ENCODE measurements at regions of chr16 and their contacts with region 1.

Region 1: DNA sequence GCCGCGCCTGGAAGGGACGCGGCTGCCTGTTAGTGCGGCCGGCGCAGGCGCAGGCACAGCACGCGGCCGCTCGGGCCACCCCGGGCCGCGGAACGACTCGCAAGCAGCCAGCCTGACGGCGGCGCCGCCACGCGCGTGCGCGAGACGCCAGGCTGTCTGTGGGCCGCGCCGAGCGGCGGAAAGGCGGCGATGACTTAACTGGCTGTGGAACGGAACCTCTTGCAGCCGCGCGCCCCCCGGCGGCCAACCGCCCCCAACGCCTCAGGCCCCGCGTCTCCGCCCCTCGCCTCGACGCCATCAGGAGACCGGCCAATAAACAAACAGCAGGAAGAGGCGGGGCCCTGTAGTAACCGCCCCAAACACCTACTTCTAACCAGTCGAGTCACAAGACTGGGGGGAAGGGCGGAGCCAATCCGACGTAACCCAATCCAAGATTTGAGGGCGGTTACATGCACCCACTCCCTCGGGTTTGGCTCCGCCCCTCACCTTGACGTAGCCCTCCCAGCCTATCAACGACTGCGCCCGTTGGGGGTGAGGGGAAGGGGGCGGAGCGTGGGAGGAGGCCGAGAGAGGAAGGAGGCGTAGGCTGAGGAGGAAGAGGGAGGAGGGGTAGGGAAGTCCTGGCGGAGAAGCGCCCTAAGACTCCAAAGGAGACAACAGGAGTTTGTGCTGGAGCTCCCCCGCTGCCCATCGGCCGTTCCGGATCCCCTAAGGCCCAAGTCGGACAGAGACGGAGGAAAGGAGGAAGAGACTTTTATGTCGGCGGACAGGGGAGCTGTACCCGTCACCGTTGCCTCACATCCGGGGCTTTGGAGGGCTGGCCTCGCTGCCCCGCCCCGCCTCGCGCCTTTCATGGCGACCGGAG is at the start of gene FBRS:
- DNase-seq: peak; percentile 100
- H3K4me3 Mint-ChIP-seq: peak within 1 kb of the TSS; percentile 89
- H3K27ac Mint-ChIP-seq: peak within 1 kb of the TSS; percentile 100
- H3K4me1 Mint-ChIP-seq: peaks cover 27% of the 10 kb centered on the region
- H3K27me3 Mint-ChIP-seq: no peaks in the 10 kb centered on the region
- total RNA-seq, gene FBRS: 107 TPM in 2 replicates

Region 2: GRCh38 chr16:29862884-29863668 is 795.0 kb before region 1 on chr16 and contains the start of gene CDIPT:
- intact Hi-C with region 1: loop called (anchors 1 kb)
- DNase-seq: peak; percentile 90
- H3K4me3 Mint-ChIP-seq: peak within 1 kb of the TSS; percentile 98
- H3K27ac Mint-ChIP-seq: peak within 1 kb of the TSS; percentile 99
- H3K4me1 Mint-ChIP-seq: peaks cover 19% of the 10 kb centered on the region
- H3K27me3 Mint-ChIP-seq: no peaks in the 10 kb centered on the region
- total RNA-seq, gene CDIPT: 64.2 and 66.6 TPM in 2 replicates

Region 3: GRCh38 chr16:30091474-30092372 is 566.4 kb before region 1 on chr16 and contains the start of gene TBX6:
- intact Hi-C with region 1: loop called (anchors 2 kb)
- DNase-seq: peak; percentile 92
- H3K4me3 Mint-ChIP-seq: peak within 1 kb of the TSS; percentile 88
- H3K27ac Mint-ChIP-seq: peak within 1 kb of the TSS; percentile 97
- H3K4me1 Mint-ChIP-seq: peaks cover 37% of the 10 kb centered on the region
- H3K27me3 Mint-ChIP-seq: no peaks in the 10 kb centered on the region
- total RNA-seq, gene TBX6: 2.7 and 2.9 TPM in 2 replicates

Region 4: DNA sequence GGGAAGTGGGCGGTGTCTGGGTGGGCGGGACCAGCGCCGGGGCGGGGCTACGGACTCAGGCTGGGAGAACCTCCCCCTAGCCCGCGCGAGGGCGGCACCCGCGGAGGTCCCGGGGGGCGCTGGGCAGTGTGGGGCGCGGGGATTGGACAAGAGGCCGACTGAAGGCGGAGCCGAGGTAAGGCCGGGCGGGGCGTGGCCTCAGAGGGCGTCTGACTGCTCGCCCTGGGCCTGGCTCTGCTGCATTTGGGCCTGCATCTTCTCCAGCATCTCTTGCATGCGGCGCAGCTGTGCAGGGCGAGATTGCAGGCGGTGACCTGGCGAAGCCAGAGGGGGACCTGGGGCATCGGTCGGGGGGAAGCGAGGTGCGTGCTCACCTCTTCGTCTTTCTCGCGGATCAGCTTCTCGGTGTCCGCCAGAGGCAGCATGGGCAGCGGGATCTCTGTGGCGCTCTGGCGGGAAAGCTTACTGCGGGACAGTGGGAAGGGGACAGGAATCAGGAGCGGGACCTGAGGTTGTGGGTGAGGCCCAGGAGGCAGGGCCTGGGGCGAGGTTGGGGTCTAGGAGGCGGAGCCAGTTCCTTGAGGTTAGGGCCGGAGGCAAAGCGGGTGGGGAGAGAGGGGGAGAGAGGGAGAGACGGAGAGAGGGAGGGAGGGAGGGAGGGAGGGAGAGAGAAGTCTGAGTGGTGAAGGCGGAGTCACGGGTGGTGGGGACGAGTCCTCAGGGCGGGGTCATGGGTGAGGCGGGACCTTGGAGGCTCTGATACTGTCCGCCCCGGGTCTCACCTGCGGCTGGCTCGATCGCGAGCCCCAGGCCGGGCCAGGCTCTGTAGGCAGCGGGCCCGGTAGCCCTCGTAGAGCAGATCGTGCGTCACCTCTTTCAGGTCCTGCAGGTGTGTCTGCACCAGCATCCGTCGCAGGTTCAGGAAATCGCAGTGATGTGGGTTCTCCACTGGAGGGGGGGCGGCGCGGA is 279.6 kb before region 1 on chr16:
- intact Hi-C with region 1: loop called (anchors 2 kb)
- DNase-seq: peak; percentile 97
- H3K4me3 Mint-ChIP-seq: peak overlapping the region; percentile 81
- H3K27ac Mint-ChIP-seq: peak overlapping the region; percentile 99
- H3K4me1 Mint-ChIP-seq: peaks cover 37% of the 10 kb centered on the region
- H3K27me3 Mint-ChIP-seq: no peaks in the 10 kb centered on the region

Region 5: GRCh38 chr16:30526823-30527635 is 131.1 kb before region 1 on chr16:
- intact Hi-C with region 1: loop called (anchors 2 kb)
- DNase-seq: peak; percentile 94
- H3K4me3 Mint-ChIP-seq: peak overlapping the region; percentile 84
- H3K27ac Mint-ChIP-seq: peak overlapping the region; percentile 67
- H3K4me1 Mint-ChIP-seq: peaks cover 23% of the 10 kb centered on the region
- H3K27me3 Mint-ChIP-seq: no peaks in the 10 kb centered on the region

Region 6: DNA sequence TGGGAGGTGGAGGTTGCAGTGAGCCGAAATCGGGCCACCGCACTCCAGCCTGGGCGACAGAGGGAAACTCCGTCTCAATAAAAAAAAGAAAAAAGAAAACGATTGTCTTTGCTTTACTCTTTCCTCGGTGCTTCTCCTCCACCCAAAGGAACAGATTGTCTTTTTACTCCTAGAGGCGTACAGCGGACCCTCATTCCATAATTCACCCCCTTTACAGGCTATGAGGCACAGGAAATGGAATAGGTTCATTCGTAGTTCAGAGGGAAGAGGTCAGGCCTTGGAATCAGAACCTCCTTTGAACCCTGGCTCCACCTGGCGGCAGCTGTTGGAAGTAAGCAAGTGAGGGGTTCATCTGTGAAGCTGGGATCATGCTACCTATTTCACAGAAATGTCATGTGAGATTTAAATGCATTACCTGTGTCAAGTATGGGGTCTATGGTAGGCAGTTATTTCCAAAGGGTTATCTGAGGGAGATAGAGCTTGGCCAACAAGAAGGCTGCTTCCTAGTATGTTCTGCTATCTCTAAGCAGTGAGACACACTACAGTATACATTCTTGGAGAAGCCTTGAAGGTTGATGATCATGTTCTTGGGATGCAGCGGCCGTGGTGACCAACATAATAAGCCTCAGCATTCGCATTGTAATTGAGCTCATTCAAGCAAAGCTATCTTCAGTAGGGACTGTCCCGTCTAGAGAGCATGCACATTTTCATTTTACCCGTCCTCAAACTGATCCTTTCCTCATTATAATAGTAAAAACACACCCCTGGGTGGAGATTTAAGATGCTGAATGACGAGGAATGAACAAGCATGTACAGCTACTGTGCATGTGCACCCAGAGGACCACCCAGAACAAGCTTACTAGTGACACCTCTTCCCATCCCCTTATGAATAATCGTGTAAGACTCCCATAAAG is 29.2 kb before region 1 on chr16:
- intact Hi-C with region 1: loop called (anchors 1 kb)
- DNase-seq: peak; percentile 77
- H3K4me3 Mint-ChIP-seq: peak overlapping the region; percentile 46
- H3K27ac Mint-ChIP-seq: peak overlapping the region; percentile 60
- H3K4me1 Mint-ChIP-seq: peaks cover 4% of the 10 kb centered on the region
- H3K27me3 Mint-ChIP-seq: peaks cover under 1% of the 10 kb centered on the region

Region 7: GRCh38 chr16:31010585-31011325 is 352.7 kb after region 1 on chr16 and contains the start of gene STX1B:
- intact Hi-C with region 1: no loop called
- DNase-seq: no peak
- H3K4me3 Mint-ChIP-seq: peak within 1 kb of the TSS; percentile 60
- H3K27ac Mint-ChIP-seq: no peak within 1 kb of the TSS
- H3K4me1 Mint-ChIP-seq: peaks cover 3% of the 10 kb centered on the region
- H3K27me3 Mint-ChIP-seq: peaks cover 50% of the 10 kb centered on the region
- total RNA-seq, gene STX1B: 0.57 and 0.97 TPM in 2 replicates

Measured in activated T-helper 2 cell treated with anti-CD3 and anti-CD28 coated beads, Interferon-gamma antibody, Interleukin-2, Interleukin-4, amounts not matched to agents 10 μg/mL and 5 μg/mL and 100 μg/mL, durations not matched to agents 14 hours and 24 hours and 36 hours (primary cell).